Activated CD4-positive, alpha-beta T cell treated with anti-CD3 and anti-CD28 coated beads, Interleukin-2, amount 10 ng/mL, durations not matched to agents 24 days and 14 days (primary cell): ENCODE measurements at regions of chr5 and their contacts with region 1.

Region 1: DNA sequence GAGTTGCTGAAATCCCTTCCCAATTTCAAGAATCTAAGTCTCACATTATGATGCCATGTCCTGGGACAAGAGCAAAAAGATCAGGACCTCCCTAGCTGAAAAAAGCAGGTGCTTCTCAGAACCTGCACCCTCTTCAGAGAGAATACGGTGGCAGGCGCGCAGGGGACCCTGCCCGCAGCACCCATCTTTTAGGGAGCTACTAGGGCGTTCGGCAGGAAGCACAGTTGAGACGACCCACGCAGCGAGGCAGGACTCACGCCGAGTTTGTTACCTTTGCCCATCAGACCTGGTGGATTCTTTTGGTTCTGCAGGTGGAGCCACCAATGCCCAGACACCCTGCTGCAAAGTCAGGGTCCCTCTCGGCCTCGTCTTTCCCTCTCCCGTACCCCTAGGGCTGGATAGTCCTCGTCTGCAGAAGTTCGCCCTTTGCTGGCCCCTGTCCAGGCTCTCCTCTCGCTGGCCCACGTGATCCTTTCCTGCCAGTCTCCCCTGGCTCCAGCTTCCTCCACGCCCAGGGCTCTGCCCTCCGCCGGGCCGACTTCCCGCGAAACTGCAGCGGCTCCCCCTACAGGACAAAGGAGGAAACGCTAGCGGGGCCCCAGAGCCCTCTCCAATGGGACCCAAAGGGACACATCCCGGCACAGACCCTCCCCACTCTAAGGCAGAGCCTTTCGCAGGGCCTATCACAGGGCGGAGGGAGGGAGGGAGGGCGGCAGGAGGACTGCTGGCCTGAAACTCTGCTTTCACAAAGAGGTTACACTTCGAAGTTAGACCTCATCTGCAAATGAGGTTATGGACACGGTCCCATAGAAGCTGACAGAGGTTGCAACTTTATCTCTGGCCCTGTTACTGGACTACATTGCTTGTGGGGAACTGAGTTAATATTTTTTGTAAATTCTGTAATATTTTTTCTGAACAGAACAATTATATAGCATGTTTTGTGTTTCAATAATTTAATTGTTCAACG is 28.8 kb downstream of the TMEM174 start:
- DNase-seq: peak; percentile 89
- H3K4me3 Mint-ChIP-seq: no peak overlapping the region
- H3K27ac Mint-ChIP-seq: no peak overlapping the region
- H3K4me1 Mint-ChIP-seq: peaks cover 2% of the 10 kb centered on the region
- H3K27me3 Mint-ChIP-seq: peaks cover 36% of the 10 kb centered on the region

Region 2: DNA sequence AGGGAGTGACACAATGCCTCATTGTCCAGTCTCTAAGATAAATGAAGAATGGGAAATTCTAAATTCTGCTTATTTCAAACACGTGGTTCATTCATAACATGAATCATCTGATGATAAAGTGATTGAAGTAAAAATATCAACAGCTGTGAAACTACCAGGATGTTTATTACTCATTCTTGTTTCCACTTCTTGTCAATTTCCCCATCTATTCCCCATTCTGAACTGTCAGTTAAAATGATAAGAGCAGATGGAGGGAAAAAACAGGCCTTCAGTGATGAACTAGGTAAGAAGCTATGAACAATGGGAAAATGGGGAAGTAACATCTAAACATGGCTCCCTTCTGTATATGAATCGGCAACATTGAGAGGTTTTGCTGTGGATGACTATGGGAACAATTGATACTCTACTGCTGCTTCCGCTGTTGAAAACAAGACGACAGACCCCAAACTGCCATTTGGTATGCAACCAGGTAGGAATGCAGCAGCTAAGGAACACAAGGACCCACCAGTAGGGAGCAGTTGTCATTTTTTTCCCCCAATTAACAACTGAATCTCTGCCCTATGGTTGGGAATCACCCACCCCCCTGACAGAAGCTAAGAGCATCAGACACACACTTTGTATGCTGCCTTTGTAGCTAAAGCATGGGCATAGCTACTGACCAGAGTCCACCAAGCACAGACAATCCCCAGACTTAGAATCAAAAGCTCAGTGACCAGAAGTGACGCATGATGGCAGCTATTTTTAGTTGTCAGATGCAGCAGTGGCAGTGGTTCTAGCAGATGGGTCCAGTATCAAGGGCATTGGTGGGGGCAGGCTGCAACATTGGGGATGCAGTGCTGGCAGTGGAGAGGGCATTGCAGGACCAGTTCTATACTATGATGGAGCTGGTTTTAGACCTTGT is 641.7 kb before region 1 on chr5:
- intact Hi-C with region 1: no loop called
- DNase-seq: no peak
- H3K4me3 Mint-ChIP-seq: no peak overlapping the region
- H3K27ac Mint-ChIP-seq: no peak overlapping the region
- H3K4me1 Mint-ChIP-seq: peaks cover 8% of the 10 kb centered on the region
- H3K27me3 Mint-ChIP-seq: peaks cover 23% of the 10 kb centered on the region

Region 3: GRCh38 chr5:72920690-72921502 is 280.9 kb before region 1 on chr5:
- intact Hi-C with region 1: loop called (anchors 5 kb)
- DNase-seq: peak; percentile 20
- H3K4me3 Mint-ChIP-seq: no peak overlapping the region
- H3K27ac Mint-ChIP-seq: no peak overlapping the region
- H3K4me1 Mint-ChIP-seq: no peaks in the 10 kb centered on the region
- H3K27me3 Mint-ChIP-seq: no peaks in the 10 kb centered on the region

Region 4: DNA sequence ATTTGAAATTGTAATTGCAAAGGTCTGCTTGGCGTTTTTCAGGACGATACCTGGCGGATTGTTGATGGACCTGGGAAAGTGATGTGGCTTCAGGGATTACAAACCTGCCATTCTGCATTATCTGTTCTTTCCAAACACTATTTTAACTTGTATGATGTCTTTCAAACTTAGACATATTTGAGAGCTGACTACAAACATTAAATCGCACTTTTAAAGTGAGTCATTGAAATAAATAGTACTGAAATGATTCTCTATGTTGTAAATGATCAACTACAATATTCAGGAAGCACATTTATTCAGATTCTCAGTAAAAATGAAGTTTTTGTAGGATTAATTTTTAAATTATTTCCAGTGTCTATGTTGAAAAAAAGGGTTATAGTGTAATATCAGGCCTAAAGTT is 113.8 kb before region 1 on chr5:
- intact Hi-C with region 1: loop called (anchors 2 kb)
- DNase-seq: no peak
- H3K4me3 Mint-ChIP-seq: no peak overlapping the region
- H3K27ac Mint-ChIP-seq: no peak overlapping the region
- H3K4me1 Mint-ChIP-seq: no peaks in the 10 kb centered on the region
- H3K27me3 Mint-ChIP-seq: peaks cover 19% of the 10 kb centered on the region

Region 5: GRCh38 chr5:73419465-73420390 is 217.9 kb after region 1 on chr5:
- intact Hi-C with region 1: no loop called
- DNase-seq: no peak
- H3K4me3 Mint-ChIP-seq: no peak overlapping the region
- H3K27ac Mint-ChIP-seq: no peak overlapping the region
- H3K4me1 Mint-ChIP-seq: peaks cover 2% of the 10 kb centered on the region
- H3K27me3 Mint-ChIP-seq: peaks cover 86% of the 10 kb centered on the region

Region 6: DNA sequence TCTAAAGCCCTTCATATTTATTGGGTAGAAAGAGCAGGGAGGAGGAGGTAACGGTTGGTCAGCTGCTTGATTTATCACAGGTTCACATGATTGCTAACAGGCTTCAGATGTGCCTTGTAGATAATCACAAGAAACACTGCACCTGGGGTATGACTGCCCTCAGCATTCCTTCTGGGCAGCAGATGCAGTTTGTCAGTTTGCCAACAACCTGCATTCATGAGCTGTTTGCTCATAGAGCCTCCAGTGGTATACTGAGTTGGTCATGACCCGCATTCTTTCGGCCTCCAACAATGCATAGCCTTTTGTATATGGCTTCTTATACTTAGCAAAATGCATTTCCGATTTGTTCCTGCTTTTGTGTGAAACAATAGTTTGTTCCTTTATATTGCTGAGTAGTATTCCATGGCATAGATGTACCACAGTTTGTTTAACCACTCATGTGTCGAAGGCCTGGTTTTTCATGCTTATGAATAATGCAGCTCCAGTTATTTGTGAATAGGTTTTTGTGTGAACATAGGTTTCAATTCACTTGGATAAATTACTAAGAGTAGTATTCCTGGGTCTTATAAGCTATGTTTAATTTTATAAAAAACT is 507.8 kb after region 1 on chr5:
- intact Hi-C with region 1: no loop called
- DNase-seq: no peak
- H3K4me3 Mint-ChIP-seq: no peak overlapping the region
- H3K27ac Mint-ChIP-seq: no peak overlapping the region
- H3K4me1 Mint-ChIP-seq: no peaks in the 10 kb centered on the region
- H3K27me3 Mint-ChIP-seq: peaks cover 5% of the 10 kb centered on the region